Upper lobe of right lung (tissue), 1 donor: ENCODE measurements at regions of chr20 and their contacts with region 1.

Region 1: DNA sequence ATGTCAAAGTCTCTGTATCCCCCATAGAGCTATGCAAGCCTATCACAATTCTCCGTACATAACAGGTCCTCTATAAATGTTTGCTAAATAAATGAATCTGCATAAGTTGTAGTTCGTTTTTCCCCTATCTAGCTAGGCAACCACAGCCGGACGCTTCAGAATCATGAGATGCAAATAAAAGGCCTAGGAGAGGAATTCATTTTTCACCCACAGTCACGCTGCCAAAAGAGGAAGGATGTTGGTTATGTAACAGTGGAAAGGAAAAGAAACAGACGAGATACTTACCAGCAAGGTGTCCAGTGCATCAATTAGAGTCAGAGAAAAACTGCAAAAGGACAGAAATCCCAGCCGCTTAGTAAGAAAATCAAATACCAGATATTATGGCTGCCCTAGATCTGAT is 2.4 kb downstream of the EDEM2 start:
- DNase-seq: no peak
- ATAC-seq: peak; percentile 18
- H3K4me3 ChIP-seq: no peak overlapping the region
- H3K27ac ChIP-seq: peak overlapping the region; percentile 51
- H3K4me1 ChIP-seq: peaks cover 23% of the 10 kb centered on the region
- H3K27me3 ChIP-seq: no peaks in the 10 kb centered on the region
- CTCF ChIP-seq: no peak

Region 2: DNA sequence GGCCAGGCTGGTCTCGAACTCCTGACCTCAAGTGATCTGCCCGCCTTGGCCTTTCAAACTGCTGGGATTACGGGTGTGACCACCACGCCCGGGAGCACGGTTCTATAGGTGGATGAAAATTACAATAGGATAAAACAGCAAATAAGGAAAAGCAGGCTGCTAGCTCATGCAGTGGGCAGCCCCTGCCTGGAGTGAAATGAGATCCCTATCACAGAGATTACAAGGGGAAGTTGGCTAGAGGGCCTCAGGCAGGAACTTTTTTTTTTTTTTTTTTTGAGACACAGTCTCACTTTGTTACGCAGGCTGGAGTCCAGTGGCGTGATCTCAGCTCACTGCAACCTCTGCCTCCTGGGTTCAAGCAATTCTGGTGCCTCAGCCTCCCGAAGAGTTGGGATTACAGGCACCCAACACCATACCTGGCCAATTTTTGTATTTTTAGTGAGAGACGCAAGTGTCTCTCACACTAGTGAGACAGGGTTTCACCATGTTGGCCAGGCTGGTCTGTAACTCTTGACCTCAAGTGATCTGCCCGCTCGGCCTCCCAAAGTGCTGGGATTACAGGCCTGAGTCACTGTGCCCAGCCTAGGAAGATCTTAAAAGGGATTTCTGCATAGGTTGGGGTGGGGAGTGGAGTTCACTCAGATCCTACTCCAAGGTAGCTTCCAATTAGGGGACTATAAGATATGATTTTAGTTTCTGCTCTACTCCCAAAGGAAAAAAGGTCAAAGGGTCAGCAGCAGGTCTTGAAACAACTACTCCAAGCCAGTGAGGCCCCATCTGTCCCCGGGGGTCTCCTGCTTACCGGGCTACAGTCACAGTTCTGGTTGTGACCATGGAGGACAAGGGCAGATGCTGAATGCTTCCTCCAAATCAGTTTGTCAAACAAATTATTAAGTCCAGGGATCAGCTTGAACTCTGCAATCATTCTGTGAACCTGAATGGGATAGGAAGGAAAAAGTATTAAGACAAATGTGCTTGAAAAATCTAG is 129.2 kb before region 1 on chr20:
- intact Hi-C with region 1: no loop called
- DNase-seq: no peak
- ATAC-seq: no peak
- H3K4me3 ChIP-seq: no peak overlapping the region
- H3K27ac ChIP-seq: no peak overlapping the region
- H3K4me1 ChIP-seq: peaks cover 12% of the 10 kb centered on the region
- H3K27me3 ChIP-seq: no peaks in the 10 kb centered on the region
- CTCF ChIP-seq: no peak

Region 3: DNA sequence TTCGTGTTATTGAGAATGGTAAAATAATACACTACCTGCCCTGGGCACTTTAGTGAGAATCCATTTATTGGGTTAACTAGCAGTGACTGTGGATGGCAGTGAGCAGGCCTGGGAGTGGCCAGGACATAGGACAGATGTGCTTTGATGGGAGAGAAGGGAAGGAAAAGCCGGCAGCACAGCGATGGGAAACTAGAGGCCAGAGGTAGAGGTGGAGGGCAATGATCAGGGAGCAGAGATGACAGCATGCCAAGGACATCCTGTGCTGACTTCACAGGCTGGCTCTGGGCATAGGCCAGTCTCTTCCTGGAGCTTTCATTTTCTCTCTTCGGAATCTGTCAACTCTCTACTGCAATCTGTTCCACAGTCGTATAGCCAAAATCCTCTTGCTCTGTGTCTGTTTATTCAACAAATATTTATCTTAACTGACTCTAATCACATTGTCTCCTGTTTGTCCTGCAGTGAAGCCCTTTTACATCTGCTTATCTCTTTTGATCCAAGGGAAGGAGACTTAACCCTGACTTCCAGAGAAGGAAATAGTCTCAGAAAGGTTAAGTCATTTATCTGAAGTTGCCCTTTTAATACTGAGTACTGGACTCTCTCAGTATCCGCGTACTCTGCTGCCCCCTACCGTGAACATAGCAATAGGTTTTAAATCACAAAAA is 63.4 kb after region 1 on chr20:
- intact Hi-C with region 1: loop called (anchors 5 kb)
- DNase-seq: no peak
- ATAC-seq: peak; percentile 99
- H3K4me3 ChIP-seq: no peak overlapping the region
- H3K27ac ChIP-seq: peak overlapping the region; percentile 74
- H3K4me1 ChIP-seq: peaks cover 5% of the 10 kb centered on the region
- H3K27me3 ChIP-seq: no peaks in the 10 kb centered on the region
- CTCF ChIP-seq: peak; percentile 75